ENCODE measurements at regions of chr2 and their contacts with region 1.

Region 1: DNA sequence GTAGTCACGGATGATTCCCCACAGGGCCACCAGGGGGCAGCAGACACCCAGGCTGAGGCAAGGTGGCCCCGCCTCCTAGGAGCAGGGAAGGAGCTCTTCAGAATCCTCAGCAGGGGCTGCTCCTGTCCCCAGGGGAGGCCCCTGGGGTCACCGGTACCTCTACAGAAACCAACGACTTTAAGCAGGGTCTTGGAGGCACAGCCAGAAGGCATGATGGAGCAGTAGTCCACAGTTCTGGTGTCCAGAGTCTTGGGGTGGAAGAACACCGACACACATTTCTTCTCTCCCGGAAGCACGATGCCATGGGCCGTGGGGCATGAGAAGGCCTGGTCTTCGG is 11.5 kb downstream of the CFAP65 start:
- DNase-seq: peak; percentile 82
- ATAC-seq: peak; percentile 91
- H3K4me3 Mint-ChIP-seq: no peak overlapping the region
- H3K27ac Mint-ChIP-seq: no peak overlapping the region
- H3K4me1 Mint-ChIP-seq: no peaks in the 10 kb centered on the region
- H3K27me3 Mint-ChIP-seq: peaks cover 22% of the 10 kb centered on the region

Region 2: GRCh38 chr2:219002395-219003266 is 27.2 kb before region 1 on chr2:
- CTCF ChIA-PET with region 1: no interaction called
- POLR2A ChIA-PET with region 1: no interaction called
- DNase-seq: peak; percentile 51
- ATAC-seq: peak; percentile 13
- H3K4me3 Mint-ChIP-seq: no peak overlapping the region
- H3K27ac Mint-ChIP-seq: no peak overlapping the region
- H3K4me1 Mint-ChIP-seq: peaks cover 3% of the 10 kb centered on the region
- H3K27me3 Mint-ChIP-seq: peaks cover 64% of the 10 kb centered on the region

Region 3: GRCh38 chr2:219041252-219041651 is 11.5 kb after region 1 on chr2 and contains the start of gene CFAP65:
- CTCF ChIA-PET with region 1: interaction called, 29 read pairs
- POLR2A ChIA-PET with region 1: no interaction called
- DNase-seq: peak; percentile 39
- ATAC-seq: no peak
- H3K4me3 Mint-ChIP-seq: peak within 1 kb of the TSS; percentile 22
- H3K27ac Mint-ChIP-seq: no peak within 1 kb of the TSS
- H3K4me1 Mint-ChIP-seq: peaks cover 9% of the 10 kb centered on the region
- H3K27me3 Mint-ChIP-seq: peaks cover 44% of the 10 kb centered on the region
- total RNA-seq, gene CFAP65: not detected

Region 4: GRCh38 chr2:219124381-219125110 is 94.7 kb after region 1 on chr2:
- CTCF ChIA-PET with region 1: interaction called, 18 read pairs
- POLR2A ChIA-PET with region 1: no interaction called
- DNase-seq: peak; percentile 29
- ATAC-seq: peak; percentile 53
- H3K4me3 Mint-ChIP-seq: no peak overlapping the region
- H3K27ac Mint-ChIP-seq: peak overlapping the region; percentile 21
- H3K4me1 Mint-ChIP-seq: peaks cover 19% of the 10 kb centered on the region
- H3K27me3 Mint-ChIP-seq: no peaks in the 10 kb centered on the region

Measured in activated CD8-positive, alpha-beta T cell treated with anti-CD3 and anti-CD28 coated beads, Interleukin-2, amount 10 ng/mL, durations not matched to agents 7 days and 5 days (primary cell).